ENCODE measurements at regions of chr17 and their contacts with region 1.

Region 1: DNA sequence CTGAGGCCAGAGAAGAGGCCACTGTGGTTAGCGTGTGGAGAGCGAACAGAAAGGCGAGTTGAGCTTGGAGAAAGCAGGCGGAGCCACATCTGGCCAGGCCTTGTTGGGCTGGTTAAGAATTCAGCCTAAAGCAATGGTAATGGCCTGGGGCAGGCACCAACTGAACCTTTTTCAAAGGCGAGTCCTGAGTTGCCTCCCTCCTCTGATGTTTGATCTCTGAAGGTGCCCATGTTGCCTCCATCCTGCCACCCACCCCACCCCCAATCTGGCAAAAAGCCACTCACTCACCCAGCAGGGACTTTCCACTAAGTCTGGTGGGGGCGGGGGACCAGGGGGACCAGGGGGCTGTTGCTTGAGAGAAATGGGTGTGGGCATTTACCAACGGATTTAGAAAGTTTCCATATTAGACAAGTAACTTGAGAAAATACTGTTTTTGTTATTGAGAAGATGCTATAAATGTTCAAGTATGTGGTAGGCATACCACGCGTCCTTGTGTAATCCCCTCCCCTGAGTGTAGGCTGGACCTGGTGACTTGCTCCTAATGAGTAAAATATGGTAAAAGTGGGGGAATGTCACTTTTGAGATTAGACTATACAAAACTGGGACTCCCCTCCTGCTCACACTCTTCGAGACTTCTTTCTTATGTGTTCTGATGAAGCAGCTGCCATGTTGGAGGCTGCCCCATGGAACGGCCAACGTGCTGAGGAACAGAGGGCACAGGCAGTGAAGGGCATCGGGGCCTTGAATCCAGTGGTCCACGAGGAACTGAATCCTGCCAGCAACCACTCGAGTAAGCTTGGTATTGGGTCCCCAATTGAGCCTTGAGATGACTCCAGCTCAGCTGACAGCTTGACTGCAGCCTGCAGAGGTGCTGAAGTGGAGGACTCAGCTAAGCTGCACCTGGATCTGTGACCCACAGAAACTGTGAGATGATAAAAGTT is 29.9 kb upstream of the TNS4 start:
- DNase-seq: peak in 7 of 9 experiments; percentile 49 to 89 (median 74)
- ATAC-seq: peak; percentile 8
- H3K4me3 ChIP-seq: no peak overlapping the region
- H3K4me3 Mint-ChIP-seq: peak overlapping the region; percentile 30
- H3K27ac ChIP-seq: no peak overlapping the region
- H3K27ac Mint-ChIP-seq: peak overlapping the region; percentile 78
- H3K4me1 ChIP-seq: peaks cover 70% of the 10 kb centered on the region
- H3K4me1 Mint-ChIP-seq: peaks cover 76% of the 10 kb centered on the region
- H3K27me3 ChIP-seq: no peaks in the 10 kb centered on the region
- H3K27me3 Mint-ChIP-seq: no peaks in the 10 kb centered on the region
- CTCF ChIP-seq: no peak

Region 2: GRCh38 chr17:40362696-40363110 is 168.6 kb before region 1 on chr17:
- CTCF ChIA-PET with region 1: interaction called, 63 read pairs
- POLR2A ChIA-PET with region 1: interaction called, 6 read pairs
- intact Hi-C with region 1: loop called (anchors 1 kb)
- DNase-seq: peak; percentile 55 to 82 (median 77)
- ATAC-seq: peak; percentile 79
- H3K4me3 ChIP-seq: peak overlapping the region in 1 of 2 experiments; percentile 20
- H3K4me3 Mint-ChIP-seq: peak overlapping the region; percentile 78
- H3K27ac ChIP-seq: no peak overlapping the region
- H3K27ac Mint-ChIP-seq: no peak overlapping the region
- H3K4me1 ChIP-seq: peaks cover 15% of the 10 kb centered on the region
- H3K4me1 Mint-ChIP-seq: peaks cover 10% of the 10 kb centered on the region
- H3K27me3 ChIP-seq: peaks cover 0 to 6% of the 10 kb centered on the region in 2 experiments
- H3K27me3 Mint-ChIP-seq: peaks cover 6% of the 10 kb centered on the region
- CTCF ChIP-seq: peak; percentile 62

Region 3: DNA sequence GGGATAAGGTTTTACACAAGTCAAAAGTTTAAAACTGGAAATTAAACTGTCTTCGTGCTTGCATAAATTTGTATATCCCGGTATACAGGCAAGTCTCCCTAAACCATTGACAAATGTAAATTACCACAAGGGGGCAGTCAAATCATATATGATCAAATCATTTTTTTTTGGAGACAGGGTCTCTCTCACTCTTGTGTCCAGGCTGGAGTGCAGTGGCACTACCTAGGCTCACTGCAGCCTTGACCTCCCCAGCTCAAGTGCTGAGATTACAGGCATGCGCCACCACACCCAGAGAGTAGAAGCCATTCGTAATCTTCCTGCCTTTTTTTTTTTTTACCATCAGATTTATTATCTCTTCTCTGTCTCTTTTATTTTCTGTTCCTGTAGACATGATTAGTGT is 132.1 kb before region 1 on chr17:
- CTCF ChIA-PET with region 1: interaction called, 43 read pairs
- POLR2A ChIA-PET with region 1: interaction called, 4 read pairs
- intact Hi-C with region 1: loop called (anchors 1 kb)
- DNase-seq: peak in 2 of 9 experiments; percentile 71 to 78
- ATAC-seq: peak; percentile 55
- H3K4me3 ChIP-seq: no peak overlapping the region
- H3K4me3 Mint-ChIP-seq: no peak overlapping the region
- H3K27ac ChIP-seq: no peak overlapping the region
- H3K27ac Mint-ChIP-seq: no peak overlapping the region
- H3K4me1 ChIP-seq: no peaks in the 10 kb centered on the region
- H3K4me1 Mint-ChIP-seq: peaks cover 16% of the 10 kb centered on the region
- H3K27me3 ChIP-seq: no peaks in the 10 kb centered on the region
- H3K27me3 Mint-ChIP-seq: no peaks in the 10 kb centered on the region
- CTCF ChIP-seq: peak; percentile 74

Region 4: GRCh38 chr17:40443583-40444327 is 87.6 kb before region 1 on chr17:
- CTCF ChIA-PET with region 1: interaction called, 51 read pairs
- POLR2A ChIA-PET with region 1: interaction called, 6 read pairs
- intact Hi-C with region 1: loop called (anchors 1 kb)
- DNase-seq: peak; percentile 34 to 83 (median 67)
- ATAC-seq: peak; percentile 76
- H3K4me3 ChIP-seq: peak overlapping the region; percentile 42 to 49
- H3K4me3 Mint-ChIP-seq: peak overlapping the region; percentile 85
- H3K27ac ChIP-seq: no peak overlapping the region
- H3K27ac Mint-ChIP-seq: peak overlapping the region; percentile 66
- H3K4me1 ChIP-seq: peaks cover 22% of the 10 kb centered on the region
- H3K4me1 Mint-ChIP-seq: peaks cover 29% of the 10 kb centered on the region
- H3K27me3 ChIP-seq: no peaks in the 10 kb centered on the region
- H3K27me3 Mint-ChIP-seq: peaks cover 3% of the 10 kb centered on the region
- CTCF ChIP-seq: peak; percentile 30

Region 5: DNA sequence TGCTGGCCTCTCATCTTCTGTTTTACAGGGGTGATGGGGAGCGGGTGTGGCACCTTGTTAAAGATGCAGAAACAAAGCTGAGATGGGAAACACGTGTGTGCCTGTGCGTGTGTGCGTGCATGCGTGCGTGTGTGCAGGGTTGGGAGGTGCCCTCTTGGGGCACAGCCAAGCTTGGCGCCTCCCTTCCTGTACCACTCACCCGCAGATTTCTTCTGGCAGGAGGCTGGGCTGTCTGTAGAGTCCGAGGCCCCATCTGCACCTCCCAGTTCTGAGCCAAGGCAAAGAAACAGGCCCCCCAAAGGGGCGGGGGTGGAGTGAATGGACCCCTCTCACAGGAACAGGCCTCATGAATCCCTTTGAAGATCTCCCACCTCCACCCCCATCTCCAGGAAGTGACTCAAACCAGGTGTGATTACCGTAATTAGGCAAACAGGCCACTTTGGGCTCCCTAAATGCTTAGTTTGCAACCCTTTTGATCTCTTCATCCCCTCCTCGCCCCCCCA is 50.8 kb before region 1 on chr17:
- CTCF ChIA-PET with region 1: interaction called, 60 read pairs
- POLR2A ChIA-PET with region 1: interaction called, 10 read pairs
- intact Hi-C with region 1: loop called (anchors 1 kb)
- DNase-seq: peak; percentile 65 to 97 (median 82)
- ATAC-seq: peak; percentile 86
- H3K4me3 ChIP-seq: peak overlapping the region in 1 of 2 experiments; percentile 3
- H3K4me3 Mint-ChIP-seq: peak overlapping the region; percentile 50
- H3K27ac ChIP-seq: peak overlapping the region; percentile 65 to 93
- H3K27ac Mint-ChIP-seq: peak overlapping the region; percentile 98
- H3K4me1 ChIP-seq: peaks cover 37% of the 10 kb centered on the region
- H3K4me1 Mint-ChIP-seq: peaks cover 54% of the 10 kb centered on the region
- H3K27me3 ChIP-seq: no peaks in the 10 kb centered on the region
- H3K27me3 Mint-ChIP-seq: no peaks in the 10 kb centered on the region
- CTCF ChIP-seq: no peak

Region 6: DNA sequence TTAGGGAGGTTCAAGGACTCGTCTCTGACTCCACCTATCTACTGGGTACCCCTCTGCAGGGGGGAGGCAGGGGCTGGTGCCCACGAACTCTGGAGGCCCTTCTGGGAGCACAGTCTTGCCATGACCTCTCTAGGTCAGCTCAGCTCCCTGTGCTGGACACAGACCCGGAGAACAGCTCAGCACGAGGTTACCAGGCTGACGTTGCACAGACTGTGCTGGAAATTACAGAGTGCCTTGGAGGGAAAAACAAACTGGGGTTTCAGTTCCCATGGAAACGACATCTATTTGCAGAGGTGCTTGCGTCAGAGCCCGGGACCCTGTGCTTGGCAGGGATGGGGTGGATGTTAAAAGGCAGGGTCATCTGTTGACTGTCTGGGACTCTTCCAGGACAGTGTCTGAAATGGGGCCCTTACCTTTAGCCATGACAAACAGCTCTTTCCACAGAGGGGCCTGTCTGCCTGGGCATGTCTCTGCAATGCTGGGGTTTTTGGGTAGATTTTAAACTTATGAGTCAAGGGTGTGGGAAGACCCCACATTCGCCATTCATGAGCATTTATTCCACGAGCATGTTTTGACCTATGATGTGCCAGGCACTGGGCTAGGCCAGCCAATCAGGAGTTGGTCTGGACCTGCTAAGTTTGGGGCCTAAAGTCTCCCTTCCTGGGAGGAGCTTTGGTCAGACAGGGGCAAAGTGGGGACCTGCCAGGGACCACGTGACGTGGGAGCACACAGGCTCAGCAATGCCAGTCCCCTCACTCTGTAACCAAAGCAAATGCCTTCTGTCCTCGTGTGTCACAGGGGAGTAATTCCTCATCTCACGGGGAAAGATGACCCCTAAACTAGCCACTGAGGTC is 11.5 kb after region 1 on chr17:
- CTCF ChIA-PET with region 1: interaction called, 470 read pairs
- POLR2A ChIA-PET with region 1: interaction called, 755 read pairs
- intact Hi-C with region 1: loop called in 1 of 2 experiments (anchors 1 kb)
- DNase-seq: peak in 6 of 9 experiments; percentile 21 to 75 (median 58)
- ATAC-seq: peak; percentile 3
- H3K4me3 ChIP-seq: no peak overlapping the region
- H3K4me3 Mint-ChIP-seq: peak overlapping the region; percentile 72
- H3K27ac ChIP-seq: peak overlapping the region in 1 of 2 experiments; percentile 66
- H3K27ac Mint-ChIP-seq: peak overlapping the region; percentile 96
- H3K4me1 ChIP-seq: peaks cover 86% of the 10 kb centered on the region
- H3K4me1 Mint-ChIP-seq: peaks cover 88% of the 10 kb centered on the region
- H3K27me3 ChIP-seq: no peaks in the 10 kb centered on the region
- H3K27me3 Mint-ChIP-seq: no peaks in the 10 kb centered on the region
- CTCF ChIP-seq: no peak

Region 7: DNA sequence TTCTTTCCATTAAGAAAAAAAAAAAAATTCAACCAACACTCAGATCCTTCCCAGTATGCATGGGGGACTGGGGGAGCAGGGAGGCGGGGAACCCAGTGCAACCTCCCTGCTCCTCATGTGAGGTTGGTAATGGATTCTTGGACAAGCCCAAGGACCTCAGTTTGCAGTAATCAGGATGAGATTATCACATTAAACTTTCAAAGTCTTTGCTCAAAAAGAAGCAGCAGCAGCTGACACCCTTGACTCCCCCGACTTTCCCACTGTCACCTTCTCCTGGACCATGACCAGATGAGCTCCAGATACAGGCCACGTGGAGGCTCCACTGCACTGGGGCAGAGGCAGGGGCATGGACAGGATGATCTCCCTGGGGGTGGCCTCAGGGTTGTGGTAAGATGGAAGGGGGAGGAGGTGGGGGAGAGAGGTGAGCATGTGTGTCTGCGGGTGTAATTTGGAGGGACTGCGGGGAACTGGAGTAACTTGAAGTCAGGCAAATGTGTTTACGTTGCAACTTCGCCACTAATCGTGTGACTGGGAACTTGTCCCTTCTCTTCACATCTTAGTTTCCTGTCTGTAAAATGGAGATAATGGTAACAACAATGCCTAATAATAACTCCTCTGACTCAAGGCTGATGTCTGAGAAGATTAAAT is 1547.2 kb after region 1 on chr17:
- CTCF ChIA-PET with region 1: no interaction called
- POLR2A ChIA-PET with region 1: no interaction called
- intact Hi-C with region 1: no loop called
- DNase-seq: no peak
- ATAC-seq: no peak
- H3K4me3 ChIP-seq: no peak overlapping the region
- H3K4me3 Mint-ChIP-seq: no peak overlapping the region
- H3K27ac ChIP-seq: no peak overlapping the region
- H3K27ac Mint-ChIP-seq: no peak overlapping the region
- H3K4me1 ChIP-seq: no peaks in the 10 kb centered on the region
- H3K4me1 Mint-ChIP-seq: peaks cover 3% of the 10 kb centered on the region
- H3K27me3 ChIP-seq: no peaks in the 10 kb centered on the region
- H3K27me3 Mint-ChIP-seq: peaks cover 6% of the 10 kb centered on the region
- CTCF ChIP-seq: no peak

Measured in CD8-positive, alpha-beta T cell (primary cell).